ENCODE measurements at regions of chr1 and their contacts with region 1.

Region 1: DNA sequence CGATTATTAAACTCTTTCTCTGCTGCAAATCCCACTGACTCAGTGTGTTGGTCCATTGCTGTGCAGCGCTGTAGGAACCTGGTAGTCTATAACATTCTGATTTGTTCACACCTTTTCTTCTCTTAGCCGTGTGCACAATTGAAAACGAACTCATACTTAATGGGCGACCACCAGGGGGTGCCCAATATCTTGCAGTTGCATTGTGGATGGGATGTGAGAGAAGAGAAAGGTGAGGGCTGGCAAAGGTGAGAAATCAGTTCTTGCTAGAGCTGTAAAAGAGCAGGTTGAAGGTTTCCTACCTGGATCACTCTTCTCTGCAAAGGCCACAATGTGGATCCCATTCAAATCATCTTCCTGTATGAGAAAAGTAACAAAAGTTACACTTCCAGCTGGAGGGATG is 51.0 kb downstream of the CASQ2 start:
- DNase-seq: peak; percentile 32
- H3K4me3 ChIP-seq: no peak overlapping the region
- H3K27ac ChIP-seq: no peak overlapping the region
- H3K4me1 ChIP-seq: no peaks in the 10 kb centered on the region
- H3K27me3 ChIP-seq: no peaks in the 10 kb centered on the region
- CTCF ChIP-seq: peak; percentile 41 to 57 (median 43)
- EP300 ChIP-seq: no peak
- POLR2A ChIP-seq: no peak

Region 2: DNA sequence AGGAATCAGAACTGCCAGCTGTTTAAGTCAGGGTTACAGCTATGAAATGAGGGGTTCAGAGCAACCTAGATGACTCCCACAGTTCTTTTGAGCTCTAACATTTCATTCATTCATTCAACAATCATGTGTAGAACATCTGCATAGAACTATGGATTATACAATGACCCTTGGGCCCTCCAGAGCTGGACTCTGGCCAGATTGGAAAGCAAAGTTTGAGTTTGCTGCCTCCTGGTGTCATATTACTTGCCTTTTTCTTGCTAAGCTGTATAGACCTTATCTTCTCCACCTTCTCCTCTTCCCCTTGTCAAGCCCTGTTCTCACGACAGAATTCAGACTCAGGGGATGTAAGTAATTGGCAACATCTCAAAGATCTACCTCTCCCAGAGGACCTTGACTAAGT is 47.0 kb after region 1 on chr1:
- in situ Hi-C with region 1: loop called in 1 of 4 experiments (anchors 10 kb)
- intact Hi-C with region 1: no loop called
- DNase-seq: peak; percentile 11
- H3K4me3 ChIP-seq: no peak overlapping the region
- H3K27ac ChIP-seq: peak overlapping the region in 1 of 4 donors; percentile 65
- H3K4me1 ChIP-seq: peaks cover 0 to 5% (median 0%) of the 10 kb centered on the region in 4 donors
- H3K27me3 ChIP-seq: no peaks in the 10 kb centered on the region
- CTCF ChIP-seq: peak in 4 of 5 experiments; percentile 27 to 41 (median 31)
- EP300 ChIP-seq: no peak
- POLR2A ChIP-seq: no peak

Region 3: GRCh38 chr1:115771847-115772457 is 54.4 kb after region 1 on chr1:
- in situ Hi-C with region 1: loop called in 1 of 4 experiments (anchors 10 kb)
- intact Hi-C with region 1: loop called (anchors 2 kb)
- DNase-seq: peak; percentile 39
- H3K4me3 ChIP-seq: peak overlapping the region in 1 of 4 donors; percentile 29
- H3K27ac ChIP-seq: peak overlapping the region in 2 of 4 donors; percentile 22 to 30
- H3K4me1 ChIP-seq: peaks cover 0 to 6% (median 0%) of the 10 kb centered on the region in 4 donors
- H3K27me3 ChIP-seq: no peaks in the 10 kb centered on the region
- CTCF ChIP-seq: peak; percentile 57 to 75 (median 72)
- EP300 ChIP-seq: no peak
- POLR2A ChIP-seq: no peak

Region 4: DNA sequence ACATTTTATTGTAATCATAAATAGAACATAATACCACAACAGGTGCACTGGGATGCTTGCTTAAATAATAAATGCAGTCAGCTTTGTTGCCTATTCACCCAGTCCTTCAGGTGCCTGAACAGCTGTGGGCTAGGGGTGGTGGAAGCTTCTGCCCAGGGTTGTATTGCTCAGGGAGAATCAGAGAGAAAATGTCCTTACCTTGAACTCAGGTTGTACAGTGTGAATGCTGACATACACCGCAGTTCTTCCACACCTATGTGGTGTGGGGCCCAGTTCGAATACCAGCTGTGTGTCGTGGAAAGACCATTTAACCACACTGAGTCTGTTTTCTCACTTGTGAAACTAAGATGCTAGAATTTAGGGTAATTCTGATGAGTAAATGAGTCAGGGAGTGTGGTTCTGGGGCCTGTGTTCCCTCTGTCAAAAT is 539.8 kb after region 1 on chr1:
- in situ Hi-C with region 1: no loop called
- intact Hi-C with region 1: no loop called
- DNase-seq: no peak
- H3K4me3 ChIP-seq: no peak overlapping the region
- H3K27ac ChIP-seq: peak overlapping the region; percentile 79 to 82 (median 80)
- H3K4me1 ChIP-seq: peaks cover 6 to 61% (median 28%) of the 10 kb centered on the region in 4 donors
- H3K27me3 ChIP-seq: no peaks in the 10 kb centered on the region
- CTCF ChIP-seq: no peak
- EP300 ChIP-seq: no peak
- POLR2A ChIP-seq: no peak

Region 5: GRCh38 chr1:116321766-116322175 is 604.2 kb after region 1 on chr1:
- in situ Hi-C with region 1: no loop called
- intact Hi-C with region 1: loop called (anchors 5 kb)
- DNase-seq: peak; percentile 26
- H3K4me3 ChIP-seq: no peak overlapping the region
- H3K27ac ChIP-seq: peak overlapping the region; percentile 43 to 69 (median 50)
- H3K4me1 ChIP-seq: peaks cover 4 to 48% (median 34%) of the 10 kb centered on the region in 4 donors
- H3K27me3 ChIP-seq: no peaks in the 10 kb centered on the region
- CTCF ChIP-seq: no peak
- EP300 ChIP-seq: no peak
- POLR2A ChIP-seq: no peak